ENCODE measurements at regions of chr6 and their contacts with region 1.

Region 1: GRCh38 chr6:161418463-161418945 is 144.6 kb upstream of the AGPAT4 start:
- DNase-seq: peak; percentile 55
- ATAC-seq: no peak
- H3K4me3 Mint-ChIP-seq: no peak overlapping the region
- H3K27ac Mint-ChIP-seq: no peak overlapping the region
- H3K4me1 Mint-ChIP-seq: no peaks in the 10 kb centered on the region
- H3K27me3 Mint-ChIP-seq: peaks cover 7% of the 10 kb centered on the region
- CTCF ChIP-seq: peak; percentile 78

Region 2: DNA sequence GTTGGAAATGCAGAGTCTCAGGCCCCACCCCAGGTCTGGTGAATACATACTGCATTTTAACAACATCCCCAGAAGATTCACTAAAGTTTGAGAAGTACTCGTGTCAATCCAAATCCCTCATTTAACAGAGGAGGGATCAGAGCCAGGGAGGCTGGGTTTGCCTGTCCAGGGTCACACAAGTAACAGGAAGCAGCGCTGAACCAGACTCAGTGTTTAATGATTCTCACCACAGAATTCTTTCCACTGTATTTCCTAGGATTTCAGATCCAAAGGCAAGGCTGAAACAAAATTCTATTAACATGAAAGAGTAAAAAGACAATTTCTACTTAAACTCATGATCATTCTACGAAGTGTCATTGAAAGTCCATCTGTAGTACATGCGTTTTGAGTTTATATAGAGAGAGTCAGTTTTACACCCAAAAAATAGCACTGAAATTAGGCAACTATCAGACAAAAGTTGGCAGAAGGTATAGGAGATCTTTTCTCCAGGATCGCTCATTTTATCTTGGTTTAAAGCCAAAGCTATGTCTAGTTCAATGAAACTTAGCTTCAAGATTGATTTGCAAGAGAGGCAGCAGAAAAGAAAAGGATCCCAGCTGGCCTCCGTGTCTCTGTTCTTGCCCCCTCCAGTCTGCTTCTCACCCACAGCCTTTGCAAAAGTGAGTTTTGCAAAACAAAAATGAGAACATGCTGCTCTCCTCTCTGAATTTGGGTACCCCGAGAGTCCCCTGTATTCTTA is 138.7 kb before region 1 on chr6:
- CTCF ChIA-PET with region 1: no interaction called
- POLR2A ChIA-PET with region 1: no interaction called
- intact Hi-C with region 1: no loop called
- DNase-seq: no peak
- ATAC-seq: no peak
- H3K4me3 Mint-ChIP-seq: no peak overlapping the region
- H3K27ac Mint-ChIP-seq: no peak overlapping the region
- H3K4me1 Mint-ChIP-seq: peaks cover 3% of the 10 kb centered on the region
- H3K27me3 Mint-ChIP-seq: peaks cover 2% of the 10 kb centered on the region
- CTCF ChIP-seq: no peak

Region 3: DNA sequence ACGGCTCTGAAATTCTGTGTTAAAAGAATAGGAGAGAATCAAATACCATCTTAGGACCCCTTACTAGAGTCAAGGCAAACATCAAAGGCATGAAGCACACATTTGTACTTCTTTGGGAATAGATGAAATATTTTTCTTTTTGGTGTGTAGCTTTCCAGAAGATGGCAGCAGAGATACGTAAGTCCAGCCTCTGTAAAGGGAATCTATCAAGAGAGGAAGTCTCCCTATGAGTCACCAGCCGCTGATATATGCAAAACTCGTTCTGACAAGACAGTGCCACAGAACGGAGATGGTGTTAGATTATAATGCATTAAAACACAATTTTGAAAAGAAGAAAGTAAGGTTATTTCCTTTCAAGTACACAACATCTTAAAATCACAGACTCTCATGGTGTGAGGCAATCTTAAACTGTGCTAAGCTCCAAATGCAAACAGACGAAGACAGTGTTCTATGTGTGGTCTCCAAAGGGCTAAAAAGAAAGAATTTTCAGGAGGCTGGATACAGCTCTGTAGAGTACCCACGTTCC is 24.6 kb before region 1 on chr6:
- CTCF ChIA-PET with region 1: interaction called, 52 read pairs
- POLR2A ChIA-PET with region 1: interaction called, 3 read pairs
- intact Hi-C with region 1: no loop called
- DNase-seq: peak; percentile 81
- ATAC-seq: peak; percentile 98
- H3K4me3 Mint-ChIP-seq: no peak overlapping the region
- H3K27ac Mint-ChIP-seq: no peak overlapping the region
- H3K4me1 Mint-ChIP-seq: peaks cover 2% of the 10 kb centered on the region
- H3K27me3 Mint-ChIP-seq: no peaks in the 10 kb centered on the region
- CTCF ChIP-seq: peak; percentile 73

Region 4: GRCh38 chr6:161400671-161401070 is 17.8 kb before region 1 on chr6:
- CTCF ChIA-PET with region 1: interaction called, 52 read pairs
- POLR2A ChIA-PET with region 1: no interaction called
- intact Hi-C with region 1: no loop called
- DNase-seq: no peak
- ATAC-seq: no peak
- H3K4me3 Mint-ChIP-seq: no peak overlapping the region
- H3K27ac Mint-ChIP-seq: no peak overlapping the region
- H3K4me1 Mint-ChIP-seq: no peaks in the 10 kb centered on the region
- H3K27me3 Mint-ChIP-seq: no peaks in the 10 kb centered on the region
- CTCF ChIP-seq: no peak

Region 5: DNA sequence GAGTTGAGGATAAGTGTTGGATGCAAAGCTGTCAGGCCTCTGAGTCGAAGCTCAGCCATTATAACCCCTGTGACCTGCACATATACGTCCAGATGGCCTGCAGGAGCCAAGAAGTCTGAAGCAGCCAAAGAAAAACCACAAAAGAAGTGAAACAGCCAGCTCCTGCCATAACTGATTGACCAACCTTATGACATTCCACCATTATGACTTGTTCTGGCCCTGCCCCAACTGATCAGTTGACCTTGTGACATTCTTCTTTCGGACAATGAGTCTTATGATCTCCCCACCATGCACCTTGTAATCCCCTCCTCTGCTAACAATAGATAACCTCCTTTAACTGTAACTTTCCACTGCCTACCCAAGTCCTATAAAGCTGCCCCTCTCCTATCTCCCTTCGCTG is 10.9 kb before region 1 on chr6:
- CTCF ChIA-PET with region 1: interaction called, 10 read pairs
- POLR2A ChIA-PET with region 1: no interaction called
- intact Hi-C with region 1: no loop called
- DNase-seq: no peak
- ATAC-seq: no peak
- H3K4me3 Mint-ChIP-seq: no peak overlapping the region
- H3K27ac Mint-ChIP-seq: no peak overlapping the region
- H3K4me1 Mint-ChIP-seq: no peaks in the 10 kb centered on the region
- H3K27me3 Mint-ChIP-seq: no peaks in the 10 kb centered on the region
- CTCF ChIP-seq: no peak

Region 6: DNA sequence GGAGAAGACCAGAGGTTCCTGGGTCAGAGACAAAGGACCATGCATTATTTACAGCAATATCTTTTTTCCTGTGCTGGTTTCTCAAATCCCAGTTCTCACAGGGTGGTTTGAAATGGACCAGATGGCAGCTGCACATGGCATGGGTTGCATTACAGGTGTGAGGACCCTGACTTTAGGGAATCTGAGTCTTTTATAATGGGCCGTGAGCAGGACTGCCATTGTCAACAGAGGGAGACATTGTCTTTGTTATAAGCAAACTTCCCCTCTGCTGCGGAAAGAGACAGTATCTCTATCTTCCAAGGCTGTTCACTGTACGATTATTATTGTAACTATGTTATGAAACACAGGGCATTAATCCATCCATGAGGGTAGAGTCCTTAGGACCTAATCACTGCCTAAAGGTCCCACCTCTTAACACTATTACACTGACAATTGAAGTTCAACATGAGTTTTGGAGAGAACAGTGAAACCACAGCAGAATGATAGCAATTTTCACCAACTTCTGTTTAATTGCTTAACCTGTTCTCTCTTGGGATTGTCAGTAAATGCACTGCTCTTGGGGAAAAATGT is 11.5 kb after region 1 on chr6:
- CTCF ChIA-PET with region 1: interaction called, 16 read pairs
- POLR2A ChIA-PET with region 1: no interaction called
- intact Hi-C with region 1: no loop called
- DNase-seq: no peak
- ATAC-seq: no peak
- H3K4me3 Mint-ChIP-seq: no peak overlapping the region
- H3K27ac Mint-ChIP-seq: no peak overlapping the region
- H3K4me1 Mint-ChIP-seq: no peaks in the 10 kb centered on the region
- H3K27me3 Mint-ChIP-seq: no peaks in the 10 kb centered on the region
- CTCF ChIP-seq: no peak

Region 7: GRCh38 chr6:161443848-161444247 is 25.3 kb after region 1 on chr6:
- CTCF ChIA-PET with region 1: interaction called, 10 read pairs
- POLR2A ChIA-PET with region 1: no interaction called
- intact Hi-C with region 1: no loop called
- DNase-seq: no peak
- ATAC-seq: no peak
- H3K4me3 Mint-ChIP-seq: no peak overlapping the region
- H3K27ac Mint-ChIP-seq: no peak overlapping the region
- H3K4me1 Mint-ChIP-seq: no peaks in the 10 kb centered on the region
- H3K27me3 Mint-ChIP-seq: peaks cover 1% of the 10 kb centered on the region
- CTCF ChIP-seq: no peak

Region 8: DNA sequence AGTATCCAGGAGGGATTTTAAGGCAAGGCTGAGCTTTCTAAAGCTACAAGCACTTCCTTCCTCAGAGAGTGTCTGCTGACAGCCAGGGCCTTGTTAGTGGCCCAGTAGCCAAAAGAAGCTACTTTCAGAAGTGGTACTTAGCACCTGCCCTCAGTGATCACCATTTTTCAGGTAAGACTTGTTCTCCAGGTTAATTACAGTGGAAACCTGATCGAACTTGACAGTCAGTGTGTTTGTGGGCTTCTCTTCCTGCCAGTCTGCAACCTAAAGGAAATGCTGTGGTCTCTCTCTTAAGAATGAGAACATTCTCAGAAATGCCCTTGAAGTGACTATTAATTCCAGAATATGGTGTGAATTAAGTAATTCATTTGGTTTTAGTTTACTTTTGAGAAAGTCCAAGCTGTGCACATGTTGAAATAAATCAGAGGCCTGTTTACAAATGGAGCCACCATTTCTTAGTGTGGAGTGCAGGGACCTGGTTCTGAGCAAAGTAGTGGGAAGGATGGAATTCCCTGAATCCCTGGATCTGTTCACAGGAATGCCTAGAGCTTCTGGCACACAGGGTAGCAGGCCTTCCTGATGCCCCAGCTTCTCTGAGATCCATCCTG is 40.6 kb after region 1 on chr6:
- CTCF ChIA-PET with region 1: interaction called, 13 read pairs
- POLR2A ChIA-PET with region 1: no interaction called
- intact Hi-C with region 1: no loop called
- DNase-seq: no peak
- ATAC-seq: no peak
- H3K4me3 Mint-ChIP-seq: no peak overlapping the region
- H3K27ac Mint-ChIP-seq: no peak overlapping the region
- H3K4me1 Mint-ChIP-seq: peaks cover 9% of the 10 kb centered on the region
- H3K27me3 Mint-ChIP-seq: no peaks in the 10 kb centered on the region
- CTCF ChIP-seq: no peak

Region 9: DNA sequence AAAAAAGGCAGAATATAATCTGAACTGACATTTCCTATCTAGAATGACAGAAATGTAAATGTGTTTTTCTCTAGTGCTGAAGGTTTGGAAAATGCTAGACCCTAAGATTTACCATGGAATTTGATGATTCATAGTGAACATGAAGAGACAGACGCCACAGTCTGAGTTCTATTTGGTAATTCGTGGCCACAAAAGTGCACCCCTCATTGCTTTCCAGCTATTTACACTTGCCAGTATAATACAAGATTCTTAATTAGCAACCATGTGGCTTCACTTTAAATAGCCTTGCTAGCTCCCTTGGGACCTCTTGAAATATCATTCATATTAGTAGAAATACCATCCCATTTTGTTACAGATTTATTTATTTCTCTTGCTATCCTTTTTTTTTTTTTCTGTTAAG is 672.2 kb after region 1 on chr6:
- CTCF ChIA-PET with region 1: no interaction called
- POLR2A ChIA-PET with region 1: no interaction called
- intact Hi-C with region 1: no loop called
- DNase-seq: no peak
- ATAC-seq: no peak
- H3K4me3 Mint-ChIP-seq: no peak overlapping the region
- H3K27ac Mint-ChIP-seq: no peak overlapping the region
- H3K4me1 Mint-ChIP-seq: no peaks in the 10 kb centered on the region
- H3K27me3 Mint-ChIP-seq: no peaks in the 10 kb centered on the region
- CTCF ChIP-seq: no peak